Vagina (tissue), 2 donors: ENCODE measurements at regions of chr19 and their contacts with region 1.

Region 1: DNA sequence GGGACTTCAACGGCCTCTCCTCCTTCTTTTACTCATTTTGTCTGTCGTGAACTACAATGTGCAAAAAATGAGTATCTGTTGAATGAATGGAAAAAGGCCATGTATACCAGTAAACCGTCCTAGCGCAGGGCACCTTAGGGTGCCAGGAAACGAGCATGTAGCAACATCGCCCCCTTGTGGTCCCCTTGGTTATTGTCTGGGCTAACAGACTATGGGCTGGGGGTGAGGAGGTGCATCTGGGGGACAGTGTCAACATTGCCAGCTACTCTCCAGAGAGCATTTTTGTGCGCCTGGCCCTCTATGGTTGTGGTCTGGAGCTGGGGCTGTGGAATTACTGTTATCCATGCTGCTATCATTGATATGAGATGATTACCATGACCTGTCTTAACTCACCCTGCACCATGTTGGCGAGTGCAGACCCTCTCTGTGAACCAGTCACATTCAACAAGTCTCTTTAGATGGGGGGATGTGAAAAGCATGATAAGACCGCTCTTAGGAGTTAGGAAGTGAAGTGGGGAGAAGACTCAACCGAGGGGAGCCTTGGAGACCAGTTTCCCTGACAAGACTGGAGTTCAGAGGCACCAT is 22.8 kb upstream of the SIGLEC11 start:
- DNase-seq: no peak
- H3K4me3 ChIP-seq: no peak overlapping the region
- H3K27ac ChIP-seq: no peak overlapping the region
- H3K4me1 ChIP-seq: no peaks in the 10 kb centered on the region
- H3K27me3 ChIP-seq: no peaks in the 10 kb centered on the region
- CTCF ChIP-seq: peak; percentile 53 to 59 (median 57)
- POLR2A ChIP-seq: no peak

Region 2: GRCh38 chr19:48518207-48518606 is 1465.5 kb before region 1 on chr19:
- intact Hi-C with region 1: no loop called
- DNase-seq: no peak
- H3K4me3 ChIP-seq: no peak overlapping the region
- H3K27ac ChIP-seq: no peak overlapping the region
- H3K4me1 ChIP-seq: peaks cover 8% of the 10 kb centered on the region
- H3K27me3 ChIP-seq: no peaks in the 10 kb centered on the region
- CTCF ChIP-seq: no peak
- POLR2A ChIP-seq: no peak

Region 3: DNA sequence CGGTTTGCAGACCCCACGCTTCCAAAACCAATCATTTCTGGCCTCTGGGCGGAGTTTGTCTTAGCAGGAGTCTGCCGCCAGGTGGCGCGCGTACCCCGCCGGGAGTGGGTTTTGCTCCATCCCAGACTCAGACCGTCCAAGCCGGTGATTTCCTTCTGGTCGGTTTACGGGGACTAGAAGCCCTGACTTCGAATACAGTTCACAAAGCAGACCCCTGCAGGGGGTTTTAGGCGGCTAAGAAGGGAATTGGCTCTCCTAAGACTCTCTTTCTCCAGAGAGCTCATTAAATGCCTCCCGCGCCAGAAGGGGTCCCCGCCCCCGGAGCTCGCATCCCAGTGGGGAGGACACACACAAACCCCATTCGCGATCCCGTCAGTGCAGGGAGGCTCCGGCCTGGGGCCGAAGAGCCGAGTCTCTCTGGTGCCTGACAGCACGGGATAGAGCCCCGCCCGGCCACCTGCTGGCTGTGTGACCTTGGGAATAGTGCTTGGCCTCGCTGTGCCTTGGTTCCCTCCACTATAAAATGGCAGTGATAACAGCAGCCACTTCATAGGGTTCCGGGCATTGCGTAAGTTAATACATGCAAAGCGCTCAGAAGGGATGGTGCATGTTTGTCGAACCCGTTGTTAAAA is 45.9 kb before region 1 on chr19:
- intact Hi-C with region 1: loop called (anchors 5 kb)
- DNase-seq: no peak
- H3K4me3 ChIP-seq: peak overlapping the region in 1 of 2 donors; percentile 21
- H3K27ac ChIP-seq: no peak overlapping the region
- H3K4me1 ChIP-seq: peaks cover 9% of the 10 kb centered on the region
- H3K27me3 ChIP-seq: no peaks in the 10 kb centered on the region
- CTCF ChIP-seq: peak; percentile 92 to 93 (median 92)
- POLR2A ChIP-seq: no peak